ENCODE measurements at regions of chr1 and their contacts with region 1.

Region 1: GRCh38 chr1:155934097-155934935 is at the start of gene KHDC4:
- DNase-seq: peak; percentile 98
- ATAC-seq: peak; percentile 96
- H3K4me3 ChIP-seq: peak within 1 kb of the TSS; percentile 93 to 98
- H3K27ac ChIP-seq: peak within 1 kb of the TSS; percentile 99
- H3K4me1 ChIP-seq: peaks cover 33% of the 10 kb centered on the region
- H3K27me3 ChIP-seq: no peaks in the 10 kb centered on the region
- CTCF ChIP-seq: no peak
- total RNA-seq, gene KHDC4: 80.4 TPM

Region 2: GRCh38 chr1:155472491-155473083 is 461.7 kb before region 1 on chr1:
- CTCF ChIA-PET with region 1: no interaction called
- POLR2A ChIA-PET with region 1: no interaction called
- in situ Hi-C with region 1: no loop called
- intact Hi-C with region 1: no loop called
- DNase-seq: no peak
- ATAC-seq: no peak
- H3K4me3 ChIP-seq: no peak overlapping the region
- H3K27ac ChIP-seq: no peak overlapping the region
- H3K4me1 ChIP-seq: no peaks in the 10 kb centered on the region
- H3K27me3 ChIP-seq: no peaks in the 10 kb centered on the region
- CTCF ChIP-seq: no peak

Region 3: DNA sequence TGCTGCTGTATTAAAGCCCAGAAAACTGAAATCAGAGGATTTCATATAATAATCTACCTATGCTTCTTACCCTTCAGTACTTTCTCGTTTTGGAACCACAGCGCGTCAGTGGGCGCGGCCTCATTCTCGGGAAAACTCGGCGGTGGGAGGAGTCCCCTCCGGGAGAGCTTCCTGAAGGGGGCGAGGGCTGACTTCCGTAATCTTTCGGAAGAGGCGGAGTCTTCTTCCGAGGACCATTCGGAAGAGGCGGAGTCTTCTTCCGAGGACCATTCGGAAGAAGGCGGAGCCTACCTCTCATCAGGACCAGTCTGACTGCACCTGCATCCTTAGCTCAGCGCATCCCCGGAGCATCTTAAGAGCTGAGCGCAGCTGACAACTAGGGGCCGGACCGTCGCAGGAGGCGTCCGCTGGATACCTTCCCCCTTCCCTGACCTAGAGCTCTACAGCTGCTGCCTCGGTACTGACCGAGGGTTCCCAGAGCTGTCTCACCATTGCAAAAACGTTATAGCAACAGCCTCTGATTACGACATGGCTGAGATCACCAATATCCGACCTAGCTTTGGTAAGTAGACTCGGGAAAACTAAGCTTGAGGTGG is 75.0 kb before region 1 on chr1 and contains the start of gene SYT11:
- CTCF ChIA-PET with region 1: no interaction called
- POLR2A ChIA-PET with region 1: interaction called, 20 read pairs
- in situ Hi-C with region 1: no loop called
- intact Hi-C with region 1: no loop called
- DNase-seq: peak; percentile 87
- ATAC-seq: peak; percentile 90
- H3K4me3 ChIP-seq: peak within 1 kb of the TSS; percentile 62 to 69
- H3K27ac ChIP-seq: peak within 1 kb of the TSS; percentile 91
- H3K4me1 ChIP-seq: peaks cover 12% of the 10 kb centered on the region
- H3K27me3 ChIP-seq: no peaks in the 10 kb centered on the region
- CTCF ChIP-seq: no peak
- total RNA-seq, gene SYT11: 4.0 TPM

Region 4: DNA sequence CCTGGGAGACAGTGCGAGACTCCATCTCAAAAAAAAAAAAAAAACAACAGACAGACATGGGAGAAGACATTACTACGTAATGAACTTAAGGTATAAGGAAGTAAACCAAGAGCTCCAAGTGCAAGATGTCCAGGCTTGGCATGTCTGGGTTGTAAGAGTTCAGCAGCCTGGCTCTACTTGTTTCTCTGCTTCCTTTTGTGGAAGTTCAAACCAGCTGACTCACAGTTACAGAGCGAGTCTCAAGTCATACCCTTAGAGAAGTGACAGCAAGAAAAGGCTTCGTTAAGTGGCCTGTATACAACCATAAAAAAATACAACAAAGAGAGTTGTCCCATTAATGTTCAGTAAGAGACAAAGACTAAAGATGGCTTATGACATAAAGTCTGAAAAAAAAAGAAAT is 24.4 kb before region 1 on chr1:
- CTCF ChIA-PET with region 1: no interaction called
- POLR2A ChIA-PET with region 1: no interaction called
- in situ Hi-C with region 1: no loop called
- intact Hi-C with region 1: no loop called
- DNase-seq: no peak
- ATAC-seq: no peak
- H3K4me3 ChIP-seq: peak overlapping the region; percentile 77 to 94
- H3K27ac ChIP-seq: peak overlapping the region; percentile 95
- H3K4me1 ChIP-seq: peaks cover 11% of the 10 kb centered on the region
- H3K27me3 ChIP-seq: no peaks in the 10 kb centered on the region
- CTCF ChIP-seq: no peak

Region 5: GRCh38 chr1:155961937-155962336 is 27.6 kb after region 1 on chr1:
- CTCF ChIA-PET with region 1: no interaction called
- POLR2A ChIA-PET with region 1: no interaction called
- in situ Hi-C with region 1: no loop called
- intact Hi-C with region 1: no loop called
- DNase-seq: peak; percentile 94
- ATAC-seq: peak; percentile 98
- H3K4me3 ChIP-seq: no peak overlapping the region
- H3K27ac ChIP-seq: peak overlapping the region; percentile 62
- H3K4me1 ChIP-seq: peaks cover 16% of the 10 kb centered on the region
- H3K27me3 ChIP-seq: no peaks in the 10 kb centered on the region
- CTCF ChIP-seq: no peak; the same call in 1 of the 2 replicates

Region 6: GRCh38 chr1:155978325-155978972 is 44.1 kb after region 1 on chr1 and contains the start of gene ARHGEF2:
- CTCF ChIA-PET with region 1: interaction called, 10 read pairs
- POLR2A ChIA-PET with region 1: interaction called, 5 read pairs
- in situ Hi-C with region 1: no loop called
- intact Hi-C with region 1: no loop called
- DNase-seq: no peak
- ATAC-seq: peak; percentile 85
- H3K4me3 ChIP-seq: peak within 1 kb of the TSS; percentile 82 to 89
- H3K27ac ChIP-seq: peak within 1 kb of the TSS; percentile 99
- H3K4me1 ChIP-seq: peaks cover 61% of the 10 kb centered on the region
- H3K27me3 ChIP-seq: no peaks in the 10 kb centered on the region
- CTCF ChIP-seq: no peak
- total RNA-seq, gene ARHGEF2: 87.0 TPM

Region 7: DNA sequence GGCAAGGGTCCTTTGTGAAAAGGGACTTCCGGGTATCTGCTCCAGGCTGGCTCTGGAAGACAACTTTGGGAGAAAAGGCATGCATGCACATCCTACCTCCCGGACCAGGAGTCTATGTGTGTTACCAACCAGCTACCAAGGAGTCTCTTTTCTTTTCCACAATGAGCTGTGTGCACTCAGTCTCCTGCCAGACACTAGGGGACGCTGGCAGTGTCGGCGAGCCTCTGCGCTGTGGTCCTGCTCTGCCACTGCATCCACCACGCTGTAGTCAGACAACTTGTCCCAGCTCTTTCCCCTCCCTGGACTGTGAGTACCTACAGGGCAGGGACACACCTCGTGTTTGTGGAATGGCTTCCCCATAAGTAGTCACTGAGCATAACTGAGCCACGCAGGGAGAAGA is 91.6 kb after region 1 on chr1:
- CTCF ChIA-PET with region 1: interaction called, 11 read pairs
- POLR2A ChIA-PET with region 1: no interaction called
- in situ Hi-C with region 1: no loop called
- intact Hi-C with region 1: no loop called
- DNase-seq: no peak
- ATAC-seq: peak; percentile 93
- H3K4me3 ChIP-seq: no peak overlapping the region
- H3K27ac ChIP-seq: no peak overlapping the region
- H3K4me1 ChIP-seq: peaks cover 2% of the 10 kb centered on the region; the same call in 1 of the 2 replicates
- H3K27me3 ChIP-seq: no peaks in the 10 kb centered on the region
- CTCF ChIP-seq: peak; percentile 84

Region 8: DNA sequence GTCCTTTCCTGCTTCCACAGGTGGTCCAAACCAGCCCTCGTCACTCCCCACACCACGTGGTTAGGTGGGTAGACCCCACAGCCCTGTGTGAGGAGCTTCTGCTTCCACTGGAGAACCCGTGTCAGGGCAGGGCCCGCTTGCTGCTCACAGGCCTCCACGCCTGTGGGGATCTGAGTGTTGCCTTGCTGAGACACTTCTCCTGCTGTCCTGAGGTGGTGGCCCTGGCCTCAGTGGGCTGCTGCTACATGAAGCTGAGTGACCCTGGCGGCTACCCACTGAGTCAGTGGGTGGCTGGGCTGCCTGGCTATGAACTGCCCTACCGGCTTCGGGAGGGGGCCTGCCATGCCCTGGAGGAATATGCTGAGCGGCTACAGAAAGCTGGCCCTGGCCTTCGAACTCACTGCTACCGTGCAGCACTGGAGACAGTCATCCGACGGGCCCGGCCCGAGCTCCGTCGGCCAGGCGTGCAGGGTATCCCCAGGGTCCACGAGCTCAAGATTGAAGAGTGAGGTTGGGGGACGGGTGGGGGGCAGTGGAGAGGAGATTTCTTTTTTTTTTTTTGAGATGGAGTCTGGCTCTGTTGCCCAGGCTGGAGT is 799.8 kb after region 1 on chr1:
- CTCF ChIA-PET with region 1: no interaction called
- POLR2A ChIA-PET with region 1: interaction called, 15 read pairs
- in situ Hi-C with region 1: no loop called
- intact Hi-C with region 1: no loop called
- DNase-seq: no peak
- ATAC-seq: no peak
- H3K4me3 ChIP-seq: no peak overlapping the region
- H3K27ac ChIP-seq: no peak overlapping the region
- H3K4me1 ChIP-seq: peaks cover 5% of the 10 kb centered on the region
- H3K27me3 ChIP-seq: no peaks in the 10 kb centered on the region
- CTCF ChIP-seq: no peak

Measured in Panc1 (cell line).